Natural killer cell (primary cell): ENCODE measurements at regions of chr2 and their contacts with region 1.

Region 1: GRCh38 chr2:30472326-30472725 is 25.3 kb downstream of the LCLAT1 start:
- DNase-seq: no peak
- ATAC-seq: no peak
- H3K4me3 ChIP-seq: no peak overlapping the region
- H3K4me3 Mint-ChIP-seq: no peak overlapping the region
- H3K27ac ChIP-seq: no peak overlapping the region
- H3K27ac Mint-ChIP-seq: peak overlapping the region in 1 of 2 donors; percentile 6
- H3K4me1 ChIP-seq: no peaks in the 10 kb centered on the region
- H3K4me1 Mint-ChIP-seq: peaks cover 17 to 21% of the 10 kb centered on the region in 2 donors
- H3K27me3 ChIP-seq: no peaks in the 10 kb centered on the region
- H3K27me3 Mint-ChIP-seq: no peaks in the 10 kb centered on the region
- CTCF ChIP-seq: no peak

Region 2: GRCh38 chr2:30208452-30208851 is 263.9 kb before region 1 on chr2:
- intact Hi-C with region 1: loop called (anchors 5 kb)
- DNase-seq: peak in 1 of 2 donors; percentile 73
- ATAC-seq: peak in 2 of 3 donors; percentile 78 to 84
- H3K4me3 ChIP-seq: no peak overlapping the region
- H3K4me3 Mint-ChIP-seq: no peak overlapping the region
- H3K27ac ChIP-seq: no peak overlapping the region
- H3K27ac Mint-ChIP-seq: peak overlapping the region in 1 of 2 donors; percentile 2
- H3K4me1 ChIP-seq: peaks cover 12% of the 10 kb centered on the region
- H3K4me1 Mint-ChIP-seq: peaks cover 14 to 15% of the 10 kb centered on the region in 2 donors
- H3K27me3 ChIP-seq: no peaks in the 10 kb centered on the region
- H3K27me3 Mint-ChIP-seq: no peaks in the 10 kb centered on the region
- CTCF ChIP-seq: peak; percentile 89

Region 3: DNA sequence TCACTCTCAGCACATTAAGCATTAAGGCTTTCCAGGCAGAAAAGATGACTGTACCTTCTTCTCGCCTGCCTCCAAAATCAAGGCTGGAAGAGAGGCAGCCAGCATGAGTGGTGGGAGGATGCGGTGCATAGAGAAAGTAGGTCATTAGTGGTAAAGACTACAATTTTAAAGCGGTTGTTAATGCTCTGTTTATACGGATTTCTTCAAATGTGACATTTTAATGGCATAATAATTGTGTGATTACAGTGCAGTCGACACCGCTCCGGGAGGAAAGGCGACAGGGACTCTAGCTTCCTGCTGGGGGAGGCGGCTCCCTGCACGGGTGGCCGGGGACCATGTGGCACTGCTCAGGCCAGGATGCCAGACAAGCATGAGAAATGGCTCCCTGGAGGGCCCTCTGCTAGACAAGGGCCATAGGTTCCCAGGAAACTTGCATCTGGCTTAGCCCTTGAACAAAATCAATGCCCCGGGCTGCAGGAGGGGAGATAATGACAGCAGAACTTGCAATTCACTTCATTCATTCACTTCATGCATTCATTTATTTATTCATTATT is 536.3 kb after region 1 on chr2:
- intact Hi-C with region 1: no loop called
- DNase-seq: no peak
- ATAC-seq: no peak
- H3K4me3 ChIP-seq: no peak overlapping the region
- H3K4me3 Mint-ChIP-seq: no peak overlapping the region
- H3K27ac ChIP-seq: no peak overlapping the region
- H3K27ac Mint-ChIP-seq: no peak overlapping the region
- H3K4me1 ChIP-seq: no peaks in the 10 kb centered on the region
- H3K4me1 Mint-ChIP-seq: no peaks in the 10 kb centered on the region
- H3K27me3 ChIP-seq: no peaks in the 10 kb centered on the region
- H3K27me3 Mint-ChIP-seq: peaks cover 6 to 19% of the 10 kb centered on the region in 2 donors
- CTCF ChIP-seq: no peak